Common myeloid progenitor, CD34-positive (primary cell): ENCODE measurements at regions of chr4 and their contacts with region 1.

Region 1: DNA sequence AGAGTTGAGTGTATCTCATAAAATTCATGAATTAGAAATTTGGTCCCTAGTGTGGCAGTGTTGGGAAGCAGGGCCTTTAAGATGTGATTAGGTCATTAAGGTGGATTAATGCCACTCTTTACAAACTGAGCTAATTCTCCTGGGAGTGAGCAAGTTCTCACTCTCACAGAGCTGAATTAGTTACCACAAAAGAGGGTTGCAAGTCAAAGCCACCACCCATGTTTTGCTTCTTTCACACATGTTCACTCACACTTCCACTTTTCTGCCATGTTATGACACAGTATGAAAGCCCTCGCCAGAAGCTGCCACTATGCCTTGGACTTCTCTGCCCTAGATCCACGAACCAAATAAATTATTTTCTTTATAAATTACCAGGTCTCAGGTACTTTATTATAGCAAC is 332.1 kb downstream of the ARAP2 start:
- DNase-seq: peak in 2 of 3 donors; percentile 13 to 46
- H3K4me3 ChIP-seq: no peak overlapping the region
- H3K27ac ChIP-seq: no peak overlapping the region
- H3K4me1 ChIP-seq: peaks cover 0 to 4% (median under 1%) of the 10 kb centered on the region in 4 experiments
- H3K27me3 ChIP-seq: peaks cover 0 to 2% (median 0%) of the 10 kb centered on the region in 5 experiments

Region 2: DNA sequence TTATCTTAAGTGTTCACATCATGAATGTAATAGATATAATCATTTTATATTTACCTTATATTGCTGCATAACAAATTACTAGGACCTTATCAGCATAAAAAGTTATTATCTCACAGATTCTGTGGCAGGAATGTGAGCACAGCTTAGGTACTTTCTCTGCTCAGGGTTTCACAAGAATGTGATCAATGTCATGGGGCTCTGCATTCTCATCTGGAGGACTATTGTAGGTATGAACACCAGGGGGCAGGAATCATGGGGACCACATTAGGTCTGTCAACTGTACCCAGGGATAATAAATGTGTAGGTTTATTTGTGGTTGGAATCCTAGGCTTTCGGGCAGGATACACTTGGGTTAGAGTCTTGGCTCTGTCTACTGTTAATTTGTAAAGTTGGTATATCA is 187.0 kb before region 1 on chr4:
- CTCF ChIA-PET with region 1: interaction called, 15 read pairs
- POLR2A ChIA-PET with region 1: no interaction called
- DNase-seq: peak; percentile 11 to 35 (median 29)
- H3K4me3 ChIP-seq: no peak overlapping the region
- H3K27ac ChIP-seq: no peak overlapping the region
- H3K4me1 ChIP-seq: no peaks in the 10 kb centered on the region
- H3K27me3 ChIP-seq: no peaks in the 10 kb centered on the region

Region 3: DNA sequence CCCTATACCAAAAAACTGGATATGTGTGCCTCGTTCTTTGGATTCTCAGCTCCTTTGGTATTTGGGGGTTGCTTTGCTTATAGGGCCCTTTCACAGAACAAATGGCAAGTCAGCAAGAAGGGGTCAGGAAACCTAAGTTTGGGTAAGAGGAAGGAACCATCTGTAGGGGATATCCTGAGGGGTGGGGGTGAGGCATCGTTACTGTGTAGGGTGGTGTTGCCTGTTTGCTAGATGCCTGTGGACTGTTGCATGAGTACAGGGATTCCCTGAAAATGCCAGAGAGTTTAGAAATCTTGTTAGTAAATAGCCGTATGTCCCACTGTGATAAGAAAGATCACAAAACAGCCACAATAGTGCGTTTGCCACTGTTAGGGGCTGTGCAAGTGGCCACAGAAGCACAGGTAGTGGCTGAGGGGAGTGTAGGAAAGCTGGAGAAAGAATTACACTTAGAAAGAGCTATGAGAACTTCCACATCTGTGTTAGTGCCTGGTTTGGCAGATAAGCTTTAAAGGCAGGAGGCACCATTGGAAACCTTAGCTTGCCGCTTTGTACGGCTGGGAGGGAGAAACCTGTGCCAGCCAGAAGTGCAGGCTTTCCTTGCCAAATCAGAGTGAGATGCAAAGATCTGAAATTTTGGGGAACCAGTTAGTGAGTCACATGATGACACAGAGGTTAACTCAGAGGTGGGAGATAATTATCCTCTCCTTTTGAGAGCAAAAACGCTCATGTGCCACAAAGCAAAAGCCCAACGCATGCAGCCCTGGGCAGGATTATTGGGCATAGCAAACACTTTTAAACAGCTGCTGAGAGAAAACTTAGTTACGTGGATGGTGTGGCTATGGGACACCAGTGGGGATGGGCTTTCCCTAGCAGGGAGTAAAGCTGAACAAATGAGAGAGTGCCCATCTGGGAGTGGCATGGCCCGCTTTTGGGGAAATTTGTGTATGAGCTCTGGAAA is 11.6 kb before region 1 on chr4:
- CTCF ChIA-PET with region 1: interaction called, 12 read pairs
- POLR2A ChIA-PET with region 1: no interaction called
- DNase-seq: peak; percentile 71 to 96 (median 94)
- H3K4me3 ChIP-seq: peak overlapping the region in 5 of 7 experiments; percentile 33 to 65 (median 41)
- H3K27ac ChIP-seq: peak overlapping the region; percentile 34 to 69
- H3K4me1 ChIP-seq: peaks cover 9 to 34% (median 27%) of the 10 kb centered on the region in 4 experiments
- H3K27me3 ChIP-seq: no peaks in the 10 kb centered on the region

Region 4: GRCh38 chr4:36020351-36020750 is 108.2 kb after region 1 on chr4:
- CTCF ChIA-PET with region 1: no interaction called
- POLR2A ChIA-PET with region 1: no interaction called
- DNase-seq: no peak
- H3K4me3 ChIP-seq: no peak overlapping the region
- H3K27ac ChIP-seq: no peak overlapping the region
- H3K4me1 ChIP-seq: no peaks in the 10 kb centered on the region
- H3K27me3 ChIP-seq: no peaks in the 10 kb centered on the region

Region 5: DNA sequence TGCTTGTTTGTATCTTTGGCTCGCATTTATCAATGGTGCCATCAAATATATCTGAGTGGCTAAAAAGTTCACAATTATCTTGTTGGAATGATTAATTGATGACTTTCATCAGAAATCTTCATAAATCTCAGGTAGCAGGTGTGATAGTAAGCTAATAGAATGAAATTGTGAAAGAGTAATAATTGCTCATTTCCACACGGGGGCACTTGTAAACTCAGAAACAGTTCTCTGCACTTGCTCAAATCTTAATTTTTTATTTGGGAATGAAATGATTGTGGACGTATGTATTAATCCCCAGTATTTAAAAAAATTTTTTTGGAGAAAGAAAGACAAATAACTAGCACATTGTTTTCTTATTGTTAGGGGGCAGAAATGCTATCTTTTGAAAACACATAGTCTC is 502.1 kb after region 1 on chr4:
- CTCF ChIA-PET with region 1: no interaction called
- POLR2A ChIA-PET with region 1: no interaction called
- DNase-seq: peak; percentile 4 to 9 (median 9)
- H3K4me3 ChIP-seq: no peak overlapping the region
- H3K27ac ChIP-seq: no peak overlapping the region
- H3K4me1 ChIP-seq: no peaks in the 10 kb centered on the region
- H3K27me3 ChIP-seq: peaks cover 0 to 5% (median 0%) of the 10 kb centered on the region in 5 experiments